Mammary epithelial cell (primary cell): ENCODE measurements at regions of chr1 and their contacts with region 1.

Region 1: DNA sequence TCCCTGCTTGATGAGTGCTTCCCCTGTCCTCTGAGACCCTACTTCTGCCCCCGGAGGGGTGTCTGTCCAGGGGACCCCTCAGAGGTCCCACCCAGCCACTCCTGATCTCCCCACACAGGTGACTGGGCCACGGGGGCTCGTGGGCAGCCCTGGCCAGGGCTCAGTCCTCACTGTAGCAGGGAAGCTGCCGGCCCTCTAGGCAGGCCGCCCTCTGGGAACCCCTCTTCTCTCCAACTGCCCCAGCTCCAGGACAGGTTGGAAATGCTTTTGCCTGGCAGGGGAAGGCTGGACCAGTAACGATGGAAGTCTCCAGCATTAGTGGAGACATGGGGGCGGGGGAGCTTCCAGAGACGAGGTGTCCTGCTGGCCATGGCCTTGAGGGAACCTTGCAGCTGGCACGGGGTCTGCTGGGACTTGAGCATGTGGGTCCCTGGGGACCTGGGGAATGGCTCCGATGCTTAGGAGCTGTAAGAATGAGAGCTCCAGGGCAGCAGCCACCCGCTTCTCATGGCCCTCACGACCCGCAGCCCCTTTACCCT is 3.1 kb upstream of the FNDC10 start:
- DNase-seq: no peak
- H3K4me3 ChIP-seq: no peak overlapping the region
- H3K27ac ChIP-seq: no peak overlapping the region
- H3K4me1 ChIP-seq: peaks cover 12% of the 10 kb centered on the region
- H3K27me3 ChIP-seq: no peaks in the 10 kb centered on the region
- CTCF ChIP-seq: no peak

Region 2: GRCh38 chr1:1144122-1144842 is 458.8 kb before region 1 on chr1:
- CTCF ChIA-PET with region 1: no interaction called
- dilution Hi-C with region 1: no loop called
- in situ Hi-C with region 1: no loop called
- intact Hi-C with region 1: no loop called
- DNase-seq: no peak
- H3K4me3 ChIP-seq: no peak overlapping the region
- H3K27ac ChIP-seq: no peak overlapping the region
- H3K4me1 ChIP-seq: peaks cover 5% of the 10 kb centered on the region
- H3K27me3 ChIP-seq: no peaks in the 10 kb centered on the region
- CTCF ChIP-seq: no peak

Region 3: DNA sequence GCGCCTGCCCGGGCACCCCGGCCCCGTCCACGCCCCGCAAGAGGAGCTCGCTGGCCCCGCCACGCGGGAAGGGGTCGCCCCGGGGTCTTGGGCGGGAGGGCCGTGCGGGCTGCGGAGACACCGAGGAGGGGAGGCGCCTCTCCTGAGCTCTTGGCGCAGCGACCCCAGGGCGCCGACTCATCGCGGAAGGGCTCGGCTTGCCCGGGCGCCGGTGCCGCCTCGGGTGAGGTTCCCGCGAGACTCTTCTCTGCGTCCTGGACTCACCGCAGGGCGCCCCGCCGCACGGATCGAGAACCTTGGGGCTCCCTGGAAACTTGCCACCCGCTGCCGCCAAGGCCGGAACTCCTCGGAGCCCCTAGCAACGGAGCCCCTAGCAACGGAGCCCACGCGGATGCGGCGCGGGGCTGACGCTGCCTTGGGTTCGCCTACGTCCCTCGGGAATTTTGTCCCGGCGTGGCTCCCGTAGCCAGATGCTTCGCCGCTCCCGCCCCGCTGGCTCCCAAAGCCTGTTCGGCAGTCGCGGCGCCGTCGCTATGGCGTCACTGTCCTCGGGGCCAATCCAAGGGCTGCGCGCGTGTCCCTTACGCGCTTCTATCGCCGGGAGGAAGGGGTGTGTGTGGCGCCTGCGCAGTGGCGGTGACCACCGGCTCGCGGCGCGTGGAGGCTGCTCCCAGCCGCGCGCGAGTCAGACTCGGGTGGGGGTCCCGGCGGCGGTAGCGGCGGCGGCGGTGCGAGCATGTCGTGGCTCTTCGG is 91.3 kb before region 1 on chr1 and contains the start of gene ATAD3A:
- CTCF ChIA-PET with region 1: no interaction called
- dilution Hi-C with region 1: no loop called
- in situ Hi-C with region 1: no loop called
- intact Hi-C with region 1: no loop called
- DNase-seq: peak; percentile 97
- H3K4me3 ChIP-seq: peak within 1 kb of the TSS; percentile 97 to 99 (median 99)
- H3K27ac ChIP-seq: peak within 1 kb of the TSS; percentile 85
- H3K4me1 ChIP-seq: peaks cover 9% of the 10 kb centered on the region
- H3K27me3 ChIP-seq: no peaks in the 10 kb centered on the region
- CTCF ChIP-seq: no peak
- total RNA-seq, gene ATAD3A: 20.7 to 70.2 TPM

Region 4: DNA sequence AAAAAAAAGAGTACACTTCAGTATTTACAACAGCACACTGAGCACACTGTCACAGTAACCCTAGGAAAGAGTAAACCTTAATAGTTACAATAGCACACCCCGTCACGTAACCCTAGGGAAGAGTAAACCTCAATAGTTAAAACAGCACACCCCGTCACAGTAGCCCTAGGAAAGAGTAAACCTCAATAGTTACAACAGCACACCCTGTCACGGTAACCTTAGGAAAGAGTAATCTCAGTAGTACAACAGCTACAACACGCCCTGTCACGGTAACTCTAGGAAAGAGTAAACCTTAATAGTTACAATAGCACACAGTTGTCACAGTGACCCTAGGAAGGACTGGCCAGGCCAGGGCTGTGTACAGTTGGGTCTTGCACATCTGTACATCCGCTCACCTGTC is 118.2 kb after region 1 on chr1:
- CTCF ChIA-PET with region 1: interaction called, 11 read pairs
- dilution Hi-C with region 1: no loop called
- in situ Hi-C with region 1: no loop called
- intact Hi-C with region 1: no loop called
- DNase-seq: no peak
- H3K4me3 ChIP-seq: no peak overlapping the region
- H3K27ac ChIP-seq: no peak overlapping the region
- H3K4me1 ChIP-seq: no peaks in the 10 kb centered on the region
- H3K27me3 ChIP-seq: no peaks in the 10 kb centered on the region
- CTCF ChIP-seq: no peak